Ascending aorta (tissue), 2 donors: ENCODE measurements at regions of chr11 and their contacts with region 1.

Region 1: GRCh38 chr11:92329646-92330045 is 105.0 kb downstream of the FAT3 start:
- DNase-seq: no peak
- H3K4me3 ChIP-seq: no peak overlapping the region
- H3K27ac ChIP-seq: no peak overlapping the region
- H3K4me1 ChIP-seq: peaks cover 0 to 10% of the 10 kb centered on the region in 2 donors
- H3K27me3 ChIP-seq: no peaks in the 10 kb centered on the region
- CTCF ChIP-seq: no peak

Region 2: DNA sequence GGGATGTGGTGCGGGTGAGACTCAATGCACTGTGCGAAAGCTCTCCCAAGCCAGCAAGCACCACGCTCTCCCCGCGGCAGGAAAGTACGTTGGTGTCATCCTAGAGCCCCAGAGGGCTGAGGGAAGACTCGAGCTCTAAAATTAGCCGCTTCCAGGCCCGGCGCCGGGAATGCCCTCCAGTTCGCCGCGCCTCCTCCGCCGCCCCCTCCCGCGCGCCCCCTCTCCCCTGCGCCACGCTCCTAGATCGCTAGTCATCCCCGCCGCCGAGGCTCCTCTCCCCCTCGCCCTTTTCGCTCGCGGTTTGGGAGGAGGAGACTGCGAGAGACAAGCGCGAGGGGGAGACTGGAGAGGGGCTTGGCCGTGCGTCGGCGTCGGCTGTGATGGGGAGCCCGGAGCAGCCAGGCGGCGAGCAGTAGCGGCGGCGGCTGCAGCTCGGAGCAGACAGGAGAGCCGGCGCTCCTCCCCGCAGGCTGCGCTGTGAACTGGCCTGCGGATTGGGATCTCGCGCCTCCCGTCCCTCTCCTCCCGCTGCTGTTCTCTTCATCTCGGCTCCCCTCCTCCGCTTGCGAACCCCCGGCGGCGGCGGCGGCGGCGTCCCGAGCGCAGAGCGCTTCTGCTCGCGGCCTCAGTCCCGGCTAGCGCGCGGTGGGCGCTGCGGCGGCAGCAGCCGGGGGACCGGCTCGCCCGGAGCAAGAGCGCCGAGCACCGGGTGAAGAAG is 105.1 kb before region 1 on chr11 and contains the start of gene FAT3:
- intact Hi-C with region 1: loop called (anchors 5 kb)
- DNase-seq: peak in 1 of 2 donors; percentile 70
- H3K4me3 ChIP-seq: peak within 1 kb of the TSS; percentile 54 to 82
- H3K27ac ChIP-seq: peak within 1 kb of the TSS; percentile 60 to 61
- H3K4me1 ChIP-seq: no peaks in the 10 kb centered on the region
- H3K27me3 ChIP-seq: no peaks in the 10 kb centered on the region
- CTCF ChIP-seq: no peak
- total RNA-seq, gene FAT3: 2.8 TPM

Region 3: GRCh38 chr11:92489826-92490399 is 160.3 kb after region 1 on chr11:
- intact Hi-C with region 1: no loop called
- DNase-seq: no peak
- H3K4me3 ChIP-seq: no peak overlapping the region
- H3K27ac ChIP-seq: no peak overlapping the region
- H3K4me1 ChIP-seq: no peaks in the 10 kb centered on the region
- H3K27me3 ChIP-seq: no peaks in the 10 kb centered on the region
- CTCF ChIP-seq: no peak